Activated B cell treated with CpG ODN at 0.5 μM for 24 hours (primary cell): ENCODE measurements at regions of chr18 and their contacts with region 1.

Region 1: DNA sequence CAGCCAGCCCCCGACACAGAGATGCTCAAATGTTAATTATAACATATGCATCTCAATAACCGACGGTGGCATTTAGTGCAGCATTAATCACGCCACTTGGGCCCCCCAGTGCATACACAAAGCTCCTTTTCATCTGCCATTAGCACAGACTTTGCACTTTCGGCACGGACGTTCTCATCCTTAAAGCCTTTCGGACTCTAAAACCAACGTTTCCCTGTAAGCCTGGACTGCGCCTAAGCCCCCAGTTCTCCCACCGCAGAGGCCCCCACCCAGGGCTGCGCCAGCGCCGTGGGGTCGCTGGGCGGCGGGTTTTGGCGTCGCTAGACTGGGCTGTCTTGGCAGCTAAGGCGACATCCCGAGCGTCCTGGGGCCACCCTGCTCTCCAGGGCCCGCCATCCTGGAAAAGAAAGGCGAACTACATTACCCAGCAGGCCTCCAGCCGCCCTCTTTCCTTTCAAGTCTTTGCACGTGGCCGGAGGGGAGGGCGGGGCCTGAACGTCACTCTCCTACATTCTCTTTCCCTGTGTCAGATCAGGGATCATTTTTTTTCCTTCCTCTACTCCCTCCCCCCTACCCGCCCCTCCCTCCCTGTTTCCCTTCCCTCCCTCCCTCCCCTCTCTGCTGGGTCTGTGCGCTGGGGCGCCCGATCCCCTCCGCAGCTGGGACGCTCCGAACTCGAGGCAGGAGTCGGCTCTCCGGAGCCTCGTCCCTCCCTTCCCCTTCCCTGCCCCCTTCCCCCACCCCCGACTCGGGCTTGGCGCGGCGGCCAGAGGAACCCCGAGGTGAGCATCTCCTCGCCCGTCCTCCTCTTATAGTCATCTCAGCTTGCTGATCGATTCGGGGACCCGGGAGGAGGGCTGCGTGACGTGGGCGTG is at the start of gene CTIF:
- DNase-seq: peak; percentile 49
- ATAC-seq: peak; percentile 81
- H3K4me3 Mint-ChIP-seq: peak within 1 kb of the TSS; percentile 91
- H3K27ac Mint-ChIP-seq: peak within 1 kb of the TSS; percentile 50
- H3K4me1 Mint-ChIP-seq: peaks cover 8% of the 10 kb centered on the region
- H3K27me3 Mint-ChIP-seq: no peaks in the 10 kb centered on the region
- CTCF ChIP-seq: no peak
- total RNA-seq, gene CTIF: 9.3 and 9.7 TPM in 2 replicates

Region 2: DNA sequence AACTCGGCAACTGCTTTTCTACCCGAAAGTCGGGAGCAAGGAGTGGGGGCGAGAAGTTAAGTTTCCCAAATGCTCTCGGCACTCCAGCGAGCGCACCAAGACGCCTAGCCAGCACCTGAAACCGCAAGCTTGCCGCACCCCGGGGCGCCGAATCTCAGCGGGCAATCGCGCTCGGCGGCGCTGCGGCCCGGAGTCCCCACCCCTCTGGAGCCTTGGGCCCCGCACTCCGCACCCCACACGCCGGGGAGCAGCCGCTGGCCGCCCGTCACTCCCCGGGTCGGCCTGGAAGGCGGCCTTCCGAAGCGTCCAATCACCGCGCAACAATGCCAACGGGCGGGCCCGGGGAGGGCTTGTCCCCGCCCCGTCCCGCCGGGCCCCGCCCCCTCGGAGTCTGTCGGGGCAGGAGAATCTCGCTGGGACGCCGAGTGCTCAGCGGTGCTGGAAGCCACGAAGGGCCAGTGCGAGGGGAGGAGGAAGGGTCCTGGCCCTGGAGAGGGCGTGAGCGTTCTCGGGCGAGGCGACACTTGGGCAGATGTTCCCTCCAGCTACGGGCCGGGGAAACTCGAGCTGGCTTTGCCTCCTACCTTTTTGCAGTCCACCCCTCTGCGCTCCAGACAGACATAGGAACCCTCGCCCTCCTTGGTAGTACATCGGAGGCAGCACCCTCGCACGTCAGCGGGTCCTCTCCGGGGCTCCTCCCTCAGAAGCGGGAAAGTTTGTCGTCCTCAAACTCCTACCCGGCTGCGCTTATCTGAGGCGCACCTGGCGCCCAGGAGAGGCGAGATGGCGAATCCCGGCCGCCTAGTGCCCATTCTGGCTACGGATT is 128.5 kb before region 1 on chr18:
- CTCF ChIA-PET with region 1: no interaction called
- POLR2A ChIA-PET with region 1: no interaction called
- intact Hi-C with region 1: loop called (anchors 5 kb)
- DNase-seq: peak; percentile 49
- ATAC-seq: peak; percentile 93
- H3K4me3 Mint-ChIP-seq: peak overlapping the region; percentile 66
- H3K27ac Mint-ChIP-seq: no peak overlapping the region
- H3K4me1 Mint-ChIP-seq: peaks cover 14% of the 10 kb centered on the region
- H3K27me3 Mint-ChIP-seq: peaks cover 65% of the 10 kb centered on the region
- CTCF ChIP-seq: no peak

Region 3: GRCh38 chr18:48667276-48668254 is 128.8 kb after region 1 on chr18:
- CTCF ChIA-PET with region 1: no interaction called
- POLR2A ChIA-PET with region 1: no interaction called
- intact Hi-C with region 1: loop called (anchors 2 kb)
- DNase-seq: peak; percentile 64
- ATAC-seq: peak; percentile 95
- H3K4me3 Mint-ChIP-seq: no peak overlapping the region
- H3K27ac Mint-ChIP-seq: peak overlapping the region; percentile 48
- H3K4me1 Mint-ChIP-seq: peaks cover 22% of the 10 kb centered on the region
- H3K27me3 Mint-ChIP-seq: no peaks in the 10 kb centered on the region
- CTCF ChIP-seq: no peak

Region 4: DNA sequence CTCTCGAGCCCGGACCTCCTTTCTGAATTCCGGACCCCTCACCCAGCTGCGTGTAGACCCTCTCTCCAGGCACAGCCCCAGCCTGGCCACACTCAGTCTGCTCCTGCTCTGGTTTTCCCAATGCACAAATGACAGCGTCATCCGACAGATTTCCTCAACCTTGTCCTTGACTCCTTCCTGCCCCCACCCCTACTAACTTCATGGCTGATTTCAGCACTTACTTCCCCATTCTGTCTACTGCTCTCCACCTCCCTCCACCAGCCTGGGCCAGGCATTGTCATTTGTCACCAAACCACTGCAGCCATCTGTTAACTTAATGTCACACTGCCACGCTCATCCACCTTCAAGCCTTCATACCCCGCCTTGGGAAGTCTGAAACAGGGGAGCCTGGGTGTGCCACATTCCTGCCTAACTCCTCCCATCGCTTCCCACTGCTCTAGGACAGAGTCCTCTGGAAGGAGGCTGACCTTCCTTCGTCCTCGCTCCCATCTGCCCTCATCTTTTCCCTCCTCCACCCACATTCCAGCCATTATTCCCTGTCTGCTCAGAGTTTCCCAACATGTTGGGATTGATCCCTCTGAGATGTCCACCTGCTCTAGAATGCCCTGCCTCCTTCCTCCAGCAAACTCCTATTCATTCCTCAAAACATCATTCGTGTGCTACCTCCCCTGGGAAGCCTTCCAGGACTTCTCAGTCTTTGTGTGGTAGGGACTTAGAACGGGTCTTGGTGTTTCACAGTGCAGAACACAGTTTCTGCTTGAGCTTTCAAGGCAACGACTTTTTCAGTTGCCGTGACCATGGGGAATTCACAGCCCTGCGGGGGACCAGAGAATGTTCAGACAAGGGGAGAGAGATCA is 454.2 kb after region 1 on chr18:
- CTCF ChIA-PET with region 1: no interaction called
- POLR2A ChIA-PET with region 1: no interaction called
- intact Hi-C with region 1: loop called (anchors 1 kb)
- DNase-seq: peak; percentile 45
- ATAC-seq: peak; percentile 98
- H3K4me3 Mint-ChIP-seq: peak overlapping the region; percentile 42
- H3K27ac Mint-ChIP-seq: peak overlapping the region; percentile 70
- H3K4me1 Mint-ChIP-seq: peaks cover 20% of the 10 kb centered on the region
- H3K27me3 Mint-ChIP-seq: no peaks in the 10 kb centered on the region
- CTCF ChIP-seq: no peak

Region 5: DNA sequence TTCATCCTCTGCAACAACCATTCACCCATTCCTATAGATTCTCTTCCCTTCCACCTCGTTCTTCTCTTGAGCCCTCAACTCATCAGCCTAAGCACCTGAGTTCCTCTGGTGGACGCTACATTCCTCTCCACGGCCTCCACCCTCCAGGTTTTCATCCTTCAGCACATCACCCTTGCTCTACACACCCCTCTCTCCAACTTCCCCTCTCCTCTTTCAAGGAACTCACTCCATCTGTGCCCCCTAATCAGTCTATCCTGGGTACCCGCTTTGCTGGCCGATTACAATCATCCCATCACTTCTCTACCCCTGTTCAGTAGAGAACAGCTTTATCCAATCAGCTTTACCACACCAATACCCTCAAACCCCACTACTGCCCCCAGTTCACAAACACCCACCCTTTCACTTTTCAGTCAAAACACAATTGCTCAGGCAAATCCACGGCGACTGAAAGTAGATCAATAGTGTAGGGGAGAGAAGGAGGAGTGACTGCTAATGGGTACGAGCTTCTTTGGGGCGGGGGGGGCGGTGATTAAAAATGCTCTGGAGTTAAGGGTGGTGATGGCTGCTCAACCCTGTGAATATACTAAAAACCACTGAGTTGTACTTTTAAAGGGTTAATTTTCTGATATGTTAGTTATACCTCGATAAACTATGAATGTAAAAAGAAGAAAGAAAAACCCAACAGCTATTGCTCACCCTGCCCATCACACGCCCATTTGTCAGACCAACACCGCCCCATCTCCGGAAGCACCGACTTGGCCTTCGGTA is 920.8 kb after region 1 on chr18:
- CTCF ChIA-PET with region 1: no interaction called
- POLR2A ChIA-PET with region 1: no interaction called
- intact Hi-C with region 1: loop called (anchors 10 kb)
- DNase-seq: no peak
- ATAC-seq: peak; percentile 23
- H3K4me3 Mint-ChIP-seq: peak overlapping the region; percentile 88
- H3K27ac Mint-ChIP-seq: peak overlapping the region; percentile 77
- H3K4me1 Mint-ChIP-seq: peaks cover 45% of the 10 kb centered on the region
- H3K27me3 Mint-ChIP-seq: no peaks in the 10 kb centered on the region
- CTCF ChIP-seq: no peak

Region 6: DNA sequence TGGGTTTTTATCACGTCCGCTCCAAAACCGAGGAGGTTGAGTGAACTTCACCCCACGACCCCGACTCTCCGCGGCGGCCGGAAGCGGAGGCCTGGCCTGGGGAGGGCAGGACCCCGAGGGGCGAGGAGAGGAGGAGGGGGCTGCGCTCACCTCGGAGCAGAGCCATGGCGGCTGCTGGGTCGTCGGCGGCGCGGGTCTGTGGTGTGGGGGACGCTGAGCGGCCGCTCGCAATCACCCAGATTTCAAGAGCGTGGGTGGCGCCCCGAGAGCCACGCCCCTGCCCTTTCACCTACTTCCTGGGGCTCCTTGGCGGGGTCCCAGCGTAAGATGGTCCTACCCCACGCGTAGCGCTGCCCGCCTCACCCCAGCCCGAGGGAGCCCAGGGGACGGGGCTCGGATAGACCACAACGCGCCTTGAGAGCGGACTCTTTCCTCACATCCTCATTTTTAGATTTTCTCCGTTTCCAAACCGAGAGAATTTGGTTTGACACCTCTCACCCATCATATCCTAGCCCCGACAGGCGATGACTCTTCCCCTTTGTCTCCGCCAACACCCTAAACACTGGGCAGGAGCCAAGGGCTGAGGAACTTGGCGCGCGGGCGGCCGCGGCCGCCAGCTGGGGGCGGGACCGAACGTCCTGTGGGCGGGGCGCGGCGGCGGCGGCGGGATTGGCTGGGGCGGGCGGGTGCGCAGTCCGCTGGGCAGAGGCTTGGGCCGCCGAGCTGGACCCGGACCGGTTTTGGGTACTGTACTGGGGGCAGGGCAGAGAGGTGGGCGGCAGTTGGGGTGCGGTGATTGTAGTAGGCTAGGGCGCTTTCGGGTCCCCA is 1274.8 kb after region 1 on chr18 and contains the start of gene ACAA2:
- CTCF ChIA-PET with region 1: no interaction called
- POLR2A ChIA-PET with region 1: no interaction called
- intact Hi-C with region 1: loop called (anchors 2 kb)
- DNase-seq: peak; percentile 79
- ATAC-seq: peak; percentile 88
- H3K4me3 Mint-ChIP-seq: peak within 1 kb of the TSS; percentile 96
- H3K27ac Mint-ChIP-seq: peak within 1 kb of the TSS; percentile 95
- H3K4me1 Mint-ChIP-seq: peaks cover 24% of the 10 kb centered on the region
- H3K27me3 Mint-ChIP-seq: no peaks in the 10 kb centered on the region
- CTCF ChIP-seq: no peak
- total RNA-seq, gene ACAA2: 24.9 and 26.9 TPM in 2 replicates

Region 7: GRCh38 chr18:50374753-50375391 is 1836.1 kb after region 1 on chr18 and contains the start of gene SKA1:
- CTCF ChIA-PET with region 1: no interaction called
- POLR2A ChIA-PET with region 1: interaction called, 6 read pairs
- intact Hi-C with region 1: loop called (anchors 2 kb)
- DNase-seq: peak; percentile 85
- ATAC-seq: peak; percentile 100
- H3K4me3 Mint-ChIP-seq: peak within 1 kb of the TSS; percentile 83
- H3K27ac Mint-ChIP-seq: peak within 1 kb of the TSS; percentile 84
- H3K4me1 Mint-ChIP-seq: peaks cover 14% of the 10 kb centered on the region
- H3K27me3 Mint-ChIP-seq: peaks cover 6% of the 10 kb centered on the region
- CTCF ChIP-seq: no peak
- total RNA-seq, gene SKA1: 0.71 and 1.0 TPM in 2 replicates